ENCODE measurements at regions of chr4 and their contacts with region 1.

Region 1: GRCh38 chr4:168923526-168924194 is 86.4 kb downstream of the CBR4 start:
- DNase-seq: peak; percentile 62
- ATAC-seq: peak; percentile 61
- H3K4me3 Mint-ChIP-seq: no peak overlapping the region
- H3K27ac Mint-ChIP-seq: no peak overlapping the region
- H3K4me1 Mint-ChIP-seq: no peaks in the 10 kb centered on the region
- H3K27me3 Mint-ChIP-seq: no peaks in the 10 kb centered on the region

Region 2: GRCh38 chr4:168514249-168514852 is 409.3 kb before region 1 on chr4:
- CTCF ChIA-PET with region 1: interaction called, 14 read pairs
- POLR2A ChIA-PET with region 1: no interaction called
- DNase-seq: no peak
- ATAC-seq: no peak
- H3K4me3 Mint-ChIP-seq: no peak overlapping the region
- H3K27ac Mint-ChIP-seq: no peak overlapping the region
- H3K4me1 Mint-ChIP-seq: peaks cover 39% of the 10 kb centered on the region
- H3K27me3 Mint-ChIP-seq: peaks cover 4% of the 10 kb centered on the region

Region 3: DNA sequence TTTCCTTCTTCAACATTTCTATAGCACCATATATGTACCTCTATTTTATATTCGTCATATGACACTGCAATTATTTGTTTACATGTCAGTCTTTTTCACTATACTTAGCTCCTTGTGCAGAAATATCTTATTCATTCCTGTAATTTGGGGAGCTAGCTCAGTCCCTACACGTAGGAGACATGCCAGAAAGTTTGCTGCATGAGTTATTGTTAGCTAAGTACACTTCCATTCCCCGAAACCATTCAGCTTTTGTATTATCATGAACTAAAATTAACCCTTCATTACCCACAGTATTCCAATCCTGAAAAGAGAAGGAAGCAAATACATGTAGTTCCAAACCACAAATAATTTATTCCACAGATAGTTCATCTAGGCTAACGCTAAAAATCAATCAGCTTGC is 76.1 kb after region 1 on chr4:
- CTCF ChIA-PET with region 1: interaction called, 10 read pairs
- POLR2A ChIA-PET with region 1: no interaction called
- DNase-seq: no peak
- ATAC-seq: no peak
- H3K4me3 Mint-ChIP-seq: no peak overlapping the region
- H3K27ac Mint-ChIP-seq: no peak overlapping the region
- H3K4me1 Mint-ChIP-seq: no peaks in the 10 kb centered on the region
- H3K27me3 Mint-ChIP-seq: no peaks in the 10 kb centered on the region

Region 4: GRCh38 chr4:169010125-169011023 is 86.7 kb after region 1 on chr4 and contains the start of gene CBR4:
- CTCF ChIA-PET with region 1: interaction called, 27 read pairs
- POLR2A ChIA-PET with region 1: no interaction called
- DNase-seq: peak; percentile 97
- ATAC-seq: peak; percentile 99
- H3K4me3 Mint-ChIP-seq: peak within 1 kb of the TSS; percentile 83
- H3K27ac Mint-ChIP-seq: peak within 1 kb of the TSS; percentile 96
- H3K4me1 Mint-ChIP-seq: peaks cover 32% of the 10 kb centered on the region
- H3K27me3 Mint-ChIP-seq: peaks cover 5% of the 10 kb centered on the region
- total RNA-seq, gene CBR4: 11.6 to 11.7 TPM

Region 5: GRCh38 chr4:169485791-169486742 is 562.4 kb after region 1 on chr4:
- CTCF ChIA-PET with region 1: interaction called, 21 read pairs
- POLR2A ChIA-PET with region 1: no interaction called
- DNase-seq: peak; percentile 58
- ATAC-seq: no peak
- H3K4me3 Mint-ChIP-seq: no peak overlapping the region
- H3K27ac Mint-ChIP-seq: no peak overlapping the region
- H3K4me1 Mint-ChIP-seq: no peaks in the 10 kb centered on the region
- H3K27me3 Mint-ChIP-seq: no peaks in the 10 kb centered on the region

Region 6: GRCh38 chr4:169492438-169493163 is 568.9 kb after region 1 on chr4:
- CTCF ChIA-PET with region 1: interaction called, 10 read pairs
- POLR2A ChIA-PET with region 1: no interaction called
- DNase-seq: peak; percentile 45
- ATAC-seq: peak; percentile 49
- H3K4me3 Mint-ChIP-seq: no peak overlapping the region
- H3K27ac Mint-ChIP-seq: no peak overlapping the region
- H3K4me1 Mint-ChIP-seq: peaks cover 10% of the 10 kb centered on the region
- H3K27me3 Mint-ChIP-seq: no peaks in the 10 kb centered on the region